PC-9 (cell line): ENCODE measurements at regions of chr16 and their contacts with region 1.

Region 1: DNA sequence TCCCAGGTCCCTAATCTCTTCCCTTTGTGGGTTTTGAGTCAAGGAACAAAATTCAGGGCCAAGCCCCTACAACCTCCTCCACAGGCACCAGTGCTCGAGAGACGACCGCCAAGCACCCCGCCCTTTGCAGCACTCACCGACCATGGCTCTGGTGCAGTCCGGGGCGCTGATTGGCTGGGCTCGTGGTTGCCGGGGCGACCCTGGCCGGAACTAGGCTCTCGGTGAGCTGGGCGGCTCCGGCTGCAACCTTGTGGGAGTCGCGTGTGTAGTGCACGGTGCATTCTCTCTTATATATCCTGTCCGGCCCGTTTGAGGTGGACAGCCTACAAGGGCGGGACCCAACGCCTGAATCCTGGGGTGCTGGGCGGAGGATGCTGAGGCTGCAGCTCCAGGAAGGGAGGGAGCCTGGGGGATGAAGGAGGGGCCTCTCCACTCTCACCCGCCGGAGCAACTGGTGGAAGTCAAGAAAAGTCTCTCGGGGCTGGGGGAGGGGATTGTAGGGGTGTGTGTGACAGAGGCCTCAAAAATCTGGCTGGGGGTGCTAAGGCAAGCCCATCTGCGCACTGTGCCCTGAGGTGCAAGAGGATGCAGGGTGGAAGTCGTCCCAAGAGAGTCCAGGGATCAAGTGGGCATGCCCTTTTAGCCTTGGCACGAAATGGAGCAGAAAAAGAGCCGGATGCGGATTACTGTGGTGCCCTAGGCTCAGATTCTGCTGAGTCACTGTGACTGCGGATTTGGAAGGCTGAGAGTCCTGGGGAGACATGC is at the start of gene NQO1:
- DNase-seq: peak; percentile 98 to 99
- H3K4me3 ChIP-seq: peak within 1 kb of the TSS; percentile 99
- H3K27ac ChIP-seq: peak within 1 kb of the TSS; percentile 100
- H3K4me1 ChIP-seq: peaks cover 48% of the 10 kb centered on the region
- H3K27me3 ChIP-seq: no peaks in the 10 kb centered on the region
- CTCF ChIP-seq: no peak
- total RNA-seq, gene NQO1: 837 and 853 TPM in 2 replicates

Region 2: DNA sequence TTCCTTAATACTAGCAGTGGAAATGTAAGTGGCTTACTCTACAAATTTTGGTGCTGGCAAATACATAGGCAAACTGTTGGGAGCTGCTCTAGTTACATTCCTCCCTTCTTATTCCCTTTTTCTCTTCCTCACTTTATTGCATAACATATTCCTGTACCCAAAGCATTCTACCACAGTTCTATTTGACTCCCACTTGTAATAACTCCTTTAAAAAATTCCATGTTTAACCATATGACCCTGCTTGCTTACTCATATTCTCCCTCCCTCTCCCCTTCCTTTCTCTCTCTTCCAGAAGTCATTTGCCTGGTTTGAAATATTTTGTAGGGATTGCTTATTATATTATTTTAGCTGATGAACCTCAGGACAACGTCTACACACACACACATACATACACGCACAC is 22.8 kb before region 1 on chr16:
- CTCF ChIA-PET with region 1: interaction called, 5 read pairs
- POLR2A ChIA-PET with region 1: interaction called, 15 read pairs
- intact Hi-C with region 1: no loop called
- DNase-seq: no peak
- H3K4me3 ChIP-seq: no peak overlapping the region
- H3K27ac ChIP-seq: 0 out of 2 replicates have a peak overlapping the region, but pooled peaks have one; percentile 15
- H3K4me1 ChIP-seq: peaks cover 18% of the 10 kb centered on the region
- H3K27me3 ChIP-seq: no peaks in the 10 kb centered on the region
- CTCF ChIP-seq: no peak

Region 3: DNA sequence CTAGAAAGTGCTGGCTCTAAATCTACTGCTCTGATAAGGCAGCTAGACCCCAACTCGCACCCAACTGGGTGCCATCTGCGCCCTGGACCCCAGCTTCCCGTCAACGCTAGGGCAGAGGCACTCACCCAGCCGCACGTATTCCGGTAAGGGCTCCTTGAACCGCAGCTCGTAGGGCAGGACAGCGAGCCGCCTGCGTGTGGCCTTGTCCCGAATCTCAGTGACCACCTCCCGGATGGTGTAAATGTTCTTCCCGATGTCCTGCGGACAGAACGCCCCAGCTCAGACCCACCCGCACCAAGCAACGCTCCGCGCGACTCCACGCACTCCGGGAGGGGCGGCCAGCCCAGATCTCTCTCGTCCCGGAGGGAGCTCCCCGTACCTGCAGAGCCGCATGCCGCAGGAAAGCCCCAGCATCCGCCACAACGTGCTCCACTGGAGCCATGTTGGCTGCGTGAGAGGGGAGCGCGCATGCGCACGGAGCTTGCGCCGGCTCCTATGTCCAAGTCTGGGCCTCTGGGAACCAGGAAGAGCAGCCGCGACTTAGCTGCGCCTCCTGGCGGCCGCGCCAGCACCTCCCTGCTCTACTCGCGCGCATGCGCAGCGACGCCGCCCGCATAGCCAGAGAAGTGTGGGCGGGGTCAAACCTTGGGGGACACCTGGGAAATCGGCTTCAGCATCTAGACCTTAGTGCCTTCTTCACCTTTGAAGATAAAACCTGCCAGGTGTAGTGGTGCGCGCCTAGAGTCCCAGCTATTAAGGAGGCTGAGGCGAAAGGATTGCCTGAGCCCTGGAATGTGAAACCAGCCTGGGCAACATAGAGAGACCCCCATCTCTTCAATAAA is 28.2 kb after region 1 on chr16 and contains the start of gene NOB1:
- CTCF ChIA-PET with region 1: interaction called, 4 read pairs
- POLR2A ChIA-PET with region 1: interaction called, 3 read pairs
- intact Hi-C with region 1: loop called (anchors 1 kb)
- DNase-seq: peak; percentile 91 to 97
- H3K4me3 ChIP-seq: peak within 1 kb of the TSS; percentile 95
- H3K27ac ChIP-seq: peak within 1 kb of the TSS; percentile 52
- H3K4me1 ChIP-seq: peaks cover 20% of the 10 kb centered on the region
- H3K27me3 ChIP-seq: no peaks in the 10 kb centered on the region
- CTCF ChIP-seq: peak; percentile 94
- total RNA-seq, gene NOB1: 66.9 and 93.2 TPM in 2 replicates

Region 4: GRCh38 chr16:69761983-69762813 is 35.7 kb after region 1 on chr16 and contains the start of gene WWP2:
- CTCF ChIA-PET with region 1: no interaction called
- POLR2A ChIA-PET with region 1: no interaction called
- intact Hi-C with region 1: loop called (anchors 2 kb)
- DNase-seq: peak; percentile 70 to 74
- H3K4me3 ChIP-seq: peak within 1 kb of the TSS; percentile 99
- H3K27ac ChIP-seq: peak within 1 kb of the TSS; percentile 81
- H3K4me1 ChIP-seq: peaks cover 18% of the 10 kb centered on the region
- H3K27me3 ChIP-seq: no peaks in the 10 kb centered on the region
- CTCF ChIP-seq: no peak
- total RNA-seq, gene WWP2: 38.8 and 46.4 TPM in 2 replicates

Region 5: GRCh38 chr16:69781118-69781517 is 54.6 kb after region 1 on chr16:
- CTCF ChIA-PET with region 1: no interaction called
- POLR2A ChIA-PET with region 1: no interaction called
- intact Hi-C with region 1: no loop called
- DNase-seq: no peak
- H3K4me3 ChIP-seq: no peak overlapping the region
- H3K27ac ChIP-seq: no peak overlapping the region
- H3K4me1 ChIP-seq: no peaks in the 10 kb centered on the region
- H3K27me3 ChIP-seq: no peaks in the 10 kb centered on the region
- CTCF ChIP-seq: no peak